GM13977 (cell line): ENCODE measurements at regions of chr2 and their contacts with region 1.

Region 1: GRCh38 chr2:145744541-145745386 is 1224.8 kb upstream of the ZEB2 start:
- DNase-seq: no peak
- CTCF ChIP-seq: no peak

Region 2: GRCh38 chr2:144890828-144891227 is 853.9 kb before region 1 on chr2:
- in situ Hi-C with region 1: no loop called
- DNase-seq: no peak
- CTCF ChIP-seq: no peak

Region 3: DNA sequence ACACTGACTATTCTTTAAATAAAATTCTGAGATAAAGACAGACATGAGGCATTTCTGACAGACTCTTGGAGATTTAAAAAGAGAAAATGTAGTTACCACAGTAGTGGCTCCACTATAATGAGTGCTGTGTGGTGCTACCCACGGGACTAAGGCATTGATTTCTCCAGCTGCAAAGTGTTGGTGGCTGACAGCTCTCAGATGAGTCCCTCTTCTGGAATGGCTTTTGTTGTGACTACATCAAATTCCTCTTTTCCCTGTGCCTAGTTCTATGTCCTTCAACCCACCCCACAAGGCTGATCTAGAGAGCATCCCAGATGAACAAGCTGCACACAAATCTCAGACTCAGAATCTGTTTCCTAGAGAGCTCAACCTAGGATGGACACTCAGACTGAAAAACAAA is 340.1 kb before region 1 on chr2:
- in situ Hi-C with region 1: no loop called
- DNase-seq: no peak
- CTCF ChIP-seq: no peak

Region 4: DNA sequence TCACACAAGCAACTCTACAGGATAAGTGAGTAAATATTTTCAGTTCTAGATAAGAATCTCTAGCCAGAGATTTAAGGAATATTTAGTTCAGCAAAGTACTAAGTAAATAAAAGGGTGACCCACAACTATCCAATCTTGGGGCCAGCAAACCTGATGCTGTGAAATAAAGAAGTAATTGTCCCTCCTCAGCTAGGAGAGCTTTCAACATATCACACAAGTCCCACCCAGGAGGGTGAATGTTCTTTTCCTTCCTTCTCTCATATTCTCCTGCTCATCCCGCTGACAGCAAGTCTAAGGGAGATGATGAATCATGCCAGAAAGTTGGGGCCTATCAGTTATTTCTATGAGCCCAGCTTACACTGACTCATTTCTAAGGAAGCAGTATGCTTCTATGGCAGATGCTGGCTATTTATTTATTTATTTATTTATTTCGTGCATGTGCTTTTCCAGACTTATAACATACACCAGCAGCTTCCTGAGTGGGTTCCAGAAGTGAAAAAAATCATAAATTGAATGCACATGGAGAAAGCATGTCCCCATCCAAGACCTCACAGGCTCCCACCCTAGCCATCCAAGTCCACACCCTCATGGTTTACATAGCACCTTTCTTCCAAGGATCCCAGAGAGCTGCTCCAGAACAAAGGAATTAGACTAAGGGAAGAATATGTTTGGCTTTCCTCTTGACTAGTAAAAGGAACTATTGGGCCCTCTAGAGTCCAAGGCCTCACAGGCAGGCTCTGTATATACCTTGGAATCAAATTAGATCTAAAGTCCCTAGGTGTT is 150.7 kb before region 1 on chr2:
- in situ Hi-C with region 1: loop called (anchors 25 kb)
- DNase-seq: no peak
- CTCF ChIP-seq: peak; percentile 14